Spleen (tissue), 13 donors: ENCODE measurements at regions of chr10 and their contacts with region 1.

Region 1: DNA sequence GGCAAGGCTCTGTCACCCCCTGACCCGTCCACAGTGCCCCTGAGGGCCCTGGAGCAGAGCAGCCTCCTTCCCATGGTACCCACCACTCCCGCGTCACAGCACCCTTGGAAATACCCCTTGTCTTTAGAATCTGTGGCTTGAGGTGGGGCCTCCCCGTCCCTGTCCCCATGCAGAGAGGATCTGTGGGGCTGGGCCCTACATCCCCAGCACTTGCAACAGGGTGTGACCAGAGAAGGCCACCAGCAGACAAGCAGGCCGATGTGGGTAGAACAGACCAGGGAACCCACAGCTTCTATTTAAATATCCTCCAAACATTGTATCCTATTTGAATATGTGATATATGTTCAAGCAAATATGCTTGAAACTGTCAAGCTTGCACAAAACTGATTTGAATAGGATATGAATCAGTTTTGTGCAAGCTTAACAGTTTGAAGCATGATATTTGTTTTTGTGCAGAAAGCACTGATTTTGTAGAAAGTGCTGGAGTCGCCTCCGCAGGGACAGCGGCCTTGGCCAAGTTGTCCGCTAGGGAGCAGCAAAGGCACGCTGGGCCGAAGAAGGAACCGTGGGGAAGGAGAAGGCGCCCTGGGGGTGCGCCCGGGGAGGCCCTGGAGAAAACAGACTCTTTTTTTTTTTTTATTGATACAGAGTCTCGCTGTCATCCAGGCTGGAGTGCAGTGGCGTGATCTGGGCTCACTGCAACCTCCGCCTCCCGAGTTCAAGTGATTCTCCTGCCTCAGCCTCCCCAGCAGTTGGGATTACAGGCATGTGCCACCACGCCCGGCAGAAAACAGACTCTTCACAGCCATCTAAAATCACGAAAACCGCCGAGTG is 2.2 kb downstream of the CFAP46 start:
- DNase-seq: peak; percentile 87
- H3K4me3 ChIP-seq: no peak overlapping the region
- H3K27ac ChIP-seq: no peak overlapping the region
- H3K4me1 ChIP-seq: peaks cover 8 to 32% (median 19%) of the 10 kb centered on the region in 6 donors
- H3K27me3 ChIP-seq: peaks cover 0 to 83% (median 41%) of the 10 kb centered on the region in 7 donors
- CTCF ChIP-seq: peak; percentile 36 to 84 (median 71)
- POLR2A ChIP-seq: no peak

Region 2: DNA sequence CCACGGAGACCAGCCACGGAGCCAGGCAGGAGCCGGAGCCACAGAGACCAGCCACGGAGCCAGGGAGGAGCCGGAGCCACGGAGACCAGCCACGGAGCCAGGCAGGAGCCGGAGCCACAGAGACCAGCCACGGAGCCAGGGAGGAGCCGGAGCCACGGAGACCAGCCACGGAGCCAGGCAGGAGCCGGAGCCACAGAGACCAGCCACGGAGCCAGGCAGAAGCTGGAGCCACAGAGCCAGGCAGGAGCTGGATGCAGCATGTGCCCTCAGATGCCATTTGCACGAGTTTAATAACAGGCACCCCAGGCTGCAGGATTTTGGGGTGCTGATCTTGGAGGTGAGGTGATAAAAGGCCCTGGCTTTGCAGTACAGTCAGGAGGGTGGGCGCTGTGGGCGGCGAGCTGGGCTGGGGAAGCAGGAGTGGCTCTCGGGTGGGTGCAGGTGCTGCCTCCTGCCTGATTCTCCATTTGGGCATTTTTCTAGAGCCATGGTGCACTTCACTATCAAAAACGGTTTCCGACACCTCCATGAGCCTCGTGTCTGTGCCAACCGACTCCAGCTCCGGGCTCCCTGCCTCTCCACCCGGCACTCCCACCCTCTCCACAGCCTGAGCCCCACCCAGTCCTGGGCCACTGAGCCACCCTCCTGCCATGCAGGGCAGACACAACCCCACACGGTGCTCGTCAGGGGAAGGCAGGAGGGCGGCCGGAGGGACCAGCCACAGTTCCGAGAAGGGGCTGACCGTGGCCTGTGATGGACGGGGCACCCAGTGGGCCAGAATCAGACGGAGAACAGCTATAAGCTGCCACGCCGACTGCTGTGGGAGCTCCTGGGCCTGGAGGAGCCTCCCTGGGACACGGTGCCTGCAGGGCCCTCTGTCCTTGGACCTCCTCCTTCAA is 113.4 kb before region 1 on chr10:
- intact Hi-C with region 1: no loop called
- DNase-seq: peak; percentile 47
- H3K4me3 ChIP-seq: no peak overlapping the region
- H3K27ac ChIP-seq: no peak overlapping the region
- H3K4me1 ChIP-seq: no peaks in the 10 kb centered on the region
- H3K27me3 ChIP-seq: peaks cover 0 to 2% (median 0%) of the 10 kb centered on the region in 7 donors
- CTCF ChIP-seq: no peak
- POLR2A ChIP-seq: no peak

Region 3: DNA sequence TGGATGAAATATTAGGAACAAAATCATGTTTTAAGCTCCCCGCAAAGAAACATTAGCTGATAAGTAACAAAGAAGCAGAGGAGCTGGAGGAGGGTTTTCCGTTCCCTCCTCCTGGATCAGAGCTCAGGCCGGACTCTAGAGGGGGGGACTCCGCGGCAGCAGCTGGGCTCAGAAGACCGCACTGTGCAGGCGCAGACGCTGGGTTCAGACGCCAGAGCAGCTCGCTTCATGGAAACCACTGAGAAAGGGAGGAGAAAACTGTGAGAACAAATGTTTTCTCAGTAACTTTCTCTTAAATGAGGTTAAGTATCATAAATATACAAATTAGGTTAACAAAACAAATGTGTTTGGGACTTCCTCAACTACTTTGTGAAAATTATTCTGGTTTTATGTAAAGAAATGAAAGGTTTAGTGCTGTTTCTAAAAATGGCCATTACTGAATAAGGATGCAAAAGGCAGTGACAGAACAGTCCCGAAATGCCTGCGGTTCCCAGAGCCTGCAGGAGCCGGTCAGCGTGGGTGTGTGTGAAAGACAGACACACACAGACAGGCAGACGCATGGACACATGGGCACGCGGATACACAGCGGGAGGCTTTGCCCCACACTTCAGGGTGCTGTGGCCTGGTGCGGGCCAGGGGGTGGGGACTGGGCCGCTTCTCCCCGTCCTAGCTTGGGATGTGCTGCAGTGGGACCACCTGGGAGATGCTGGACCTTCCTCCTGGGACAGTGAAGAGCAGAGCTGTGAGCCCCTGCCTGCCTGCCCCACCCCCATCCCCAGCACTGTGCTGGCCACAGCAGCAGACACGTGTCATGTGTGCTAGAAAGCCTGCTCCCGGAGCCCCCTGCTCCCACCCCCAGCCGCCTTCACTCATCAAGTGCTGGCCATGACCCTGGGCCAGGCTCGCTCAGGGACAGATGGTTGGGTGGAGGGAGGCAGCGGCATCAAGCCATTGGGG is 127.3 kb after region 1 on chr10:
- intact Hi-C with region 1: no loop called
- DNase-seq: no peak
- H3K4me3 ChIP-seq: no peak overlapping the region
- H3K27ac ChIP-seq: no peak overlapping the region
- H3K4me1 ChIP-seq: no peaks in the 10 kb centered on the region
- H3K27me3 ChIP-seq: peaks cover 0 to 38% (median 0%) of the 10 kb centered on the region in 7 donors
- CTCF ChIP-seq: no peak
- POLR2A ChIP-seq: no peak

Region 4: DNA sequence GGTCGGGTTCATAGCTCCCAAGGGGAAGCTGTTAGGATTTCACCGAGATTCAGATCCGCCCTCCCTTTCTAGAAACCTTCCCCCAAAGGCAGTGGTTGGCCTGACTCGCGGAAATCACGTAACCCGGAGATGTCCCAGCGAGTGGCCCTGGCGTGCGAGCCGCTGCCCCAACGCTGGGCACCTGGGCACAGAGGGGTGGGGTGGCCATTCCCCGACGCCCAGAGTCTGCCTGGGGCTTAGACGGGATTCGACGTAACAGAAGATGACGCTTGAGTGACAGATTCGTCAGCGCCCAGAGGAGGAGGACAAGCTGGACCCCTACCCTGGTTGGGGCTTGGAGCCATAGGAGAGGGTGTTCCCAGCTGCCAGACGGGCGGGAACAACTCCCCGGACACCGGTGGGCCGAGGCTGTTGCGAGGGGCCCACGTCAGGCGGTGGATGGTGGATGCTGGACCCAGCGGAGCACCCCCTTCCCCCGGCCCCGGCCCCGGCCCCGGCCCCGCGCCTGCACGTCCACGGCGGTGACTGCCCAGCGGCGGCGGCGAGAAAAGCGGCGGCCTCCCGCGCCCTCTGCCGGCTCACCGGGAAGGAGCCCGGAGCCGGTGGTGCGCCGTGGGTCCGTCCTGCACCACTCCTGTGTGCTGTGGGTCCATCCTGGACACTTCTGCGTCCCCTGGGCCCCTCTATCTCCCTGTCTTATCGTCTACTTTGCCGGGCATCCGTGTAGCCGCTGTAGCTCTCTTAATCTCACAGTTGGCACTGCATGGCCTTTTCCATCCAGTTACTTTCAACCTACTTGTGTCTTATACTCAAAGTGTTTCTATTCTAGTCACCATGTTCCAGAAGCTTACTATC is 184.4 kb after region 1 on chr10:
- intact Hi-C with region 1: loop called (anchors 10 kb)
- DNase-seq: peak; percentile 83
- H3K4me3 ChIP-seq: no peak overlapping the region
- H3K27ac ChIP-seq: no peak overlapping the region
- H3K4me1 ChIP-seq: peaks cover 0 to 8% (median 0%) of the 10 kb centered on the region in 6 donors
- H3K27me3 ChIP-seq: peaks cover 0 to 54% (median 24%) of the 10 kb centered on the region in 7 donors
- CTCF ChIP-seq: peak in 9 of 11 experiments; percentile 31 to 73 (median 59)
- POLR2A ChIP-seq: no peak